CD4-positive, alpha-beta memory T cell (primary cell): ENCODE measurements at regions of chr3 and their contacts with region 1.

Region 1: DNA sequence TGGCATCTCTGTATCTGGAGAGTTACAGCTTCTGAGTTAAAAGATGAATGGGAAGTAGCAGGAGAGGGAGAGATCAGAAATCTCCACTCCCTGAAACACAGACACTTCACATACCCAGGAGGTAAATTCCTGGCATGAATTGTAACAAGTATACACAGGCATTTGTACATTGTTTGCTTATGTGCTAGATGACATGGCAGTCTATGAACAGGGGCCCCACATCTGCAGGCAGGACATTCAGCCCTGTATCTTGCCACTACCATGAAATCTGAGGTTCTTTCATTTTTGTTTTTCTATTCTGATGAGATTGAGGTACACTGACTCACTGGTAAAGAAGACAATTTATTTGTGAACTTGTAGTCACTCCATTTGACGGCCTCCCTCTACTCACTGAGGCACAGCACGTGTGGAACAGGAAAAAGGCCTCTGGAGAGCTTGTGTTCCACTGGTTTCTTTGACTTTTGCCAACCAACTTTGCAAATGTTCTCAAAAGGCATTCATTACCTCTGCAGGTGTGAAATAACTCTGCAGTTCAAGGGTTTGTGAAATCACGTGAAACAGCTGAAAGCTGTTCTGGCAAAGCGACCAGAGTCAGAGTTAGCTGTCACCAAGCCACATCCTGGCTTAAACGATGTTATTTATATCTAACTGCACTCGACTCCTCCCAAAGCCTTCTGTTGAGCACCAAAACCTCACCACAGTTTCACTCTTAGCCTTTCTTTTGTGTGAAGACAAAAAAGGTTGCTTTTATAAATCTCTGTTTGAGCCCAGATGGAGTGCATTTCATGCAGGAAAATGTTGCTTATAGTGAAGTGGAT is 401.3 kb upstream of the CFAP20DC start:
- DNase-seq: peak; percentile 79 to 88 (median 85)
- H3K4me3 ChIP-seq: peak overlapping the region in 1 of 2 donors; percentile 3
- H3K4me3 Mint-ChIP-seq: peak overlapping the region; percentile 48 to 84 (median 74)
- H3K27ac ChIP-seq: peak overlapping the region; percentile 72
- H3K27ac Mint-ChIP-seq: peak overlapping the region; percentile 95 to 99 (median 98)
- H3K4me1 ChIP-seq: peaks cover 70% of the 10 kb centered on the region
- H3K4me1 Mint-ChIP-seq: peaks cover 50 to 81% (median 71%) of the 10 kb centered on the region in 4 donors
- H3K27me3 ChIP-seq: no peaks in the 10 kb centered on the region
- H3K27me3 Mint-ChIP-seq: no peaks in the 10 kb centered on the region

Region 2: GRCh38 chr3:59212128-59212779 is 238.9 kb before region 1 on chr3:
- CTCF ChIA-PET with region 1: no interaction called
- POLR2A ChIA-PET with region 1: no interaction called
- intact Hi-C with region 1: loop called (anchors 2 kb)
- DNase-seq: peak in 4 of 5 donors; percentile 40 to 48 (median 42)
- H3K4me3 ChIP-seq: no peak overlapping the region
- H3K4me3 Mint-ChIP-seq: no peak overlapping the region
- H3K27ac ChIP-seq: no peak overlapping the region
- H3K27ac Mint-ChIP-seq: peak overlapping the region in 1 of 7 donors; percentile 38
- H3K4me1 ChIP-seq: no peaks in the 10 kb centered on the region
- H3K4me1 Mint-ChIP-seq: peaks cover 0 to 6% (median 2%) of the 10 kb centered on the region in 4 donors
- H3K27me3 ChIP-seq: no peaks in the 10 kb centered on the region
- H3K27me3 Mint-ChIP-seq: peaks cover 4 to 5% of the 10 kb centered on the region in 2 donors

Region 3: GRCh38 chr3:59386165-59386564 is 65.0 kb before region 1 on chr3:
- CTCF ChIA-PET with region 1: no interaction called
- POLR2A ChIA-PET with region 1: no interaction called
- intact Hi-C with region 1: loop called (anchors 5 kb)
- DNase-seq: no peak
- H3K4me3 ChIP-seq: no peak overlapping the region
- H3K4me3 Mint-ChIP-seq: peak overlapping the region in 6 of 8 donors; percentile 1 to 67 (median 44)
- H3K27ac ChIP-seq: no peak overlapping the region
- H3K27ac Mint-ChIP-seq: peak overlapping the region in 1 of 7 donors; percentile 5
- H3K4me1 ChIP-seq: peaks cover 24% of the 10 kb centered on the region
- H3K4me1 Mint-ChIP-seq: peaks cover 18 to 40% (median 24%) of the 10 kb centered on the region in 4 donors
- H3K27me3 ChIP-seq: no peaks in the 10 kb centered on the region
- H3K27me3 Mint-ChIP-seq: no peaks in the 10 kb centered on the region

Region 4: GRCh38 chr3:59424268-59425010 is 26.7 kb before region 1 on chr3:
- CTCF ChIA-PET with region 1: interaction called, 14 read pairs
- POLR2A ChIA-PET with region 1: interaction called, 40 read pairs
- intact Hi-C with region 1: loop called (anchors 1 kb)
- DNase-seq: peak; percentile 62 to 78 (median 70)
- H3K4me3 ChIP-seq: peak overlapping the region in 1 of 2 donors; percentile 10
- H3K4me3 Mint-ChIP-seq: peak overlapping the region; percentile 50 to 79 (median 62)
- H3K27ac ChIP-seq: no peak overlapping the region
- H3K27ac Mint-ChIP-seq: peak overlapping the region; percentile 68 to 96 (median 93)
- H3K4me1 ChIP-seq: peaks cover 47% of the 10 kb centered on the region
- H3K4me1 Mint-ChIP-seq: peaks cover 45 to 66% (median 55%) of the 10 kb centered on the region in 4 donors
- H3K27me3 ChIP-seq: no peaks in the 10 kb centered on the region
- H3K27me3 Mint-ChIP-seq: no peaks in the 10 kb centered on the region

Region 5: GRCh38 chr3:59857589-59858346 is 406.6 kb after region 1 on chr3:
- CTCF ChIA-PET with region 1: no interaction called
- POLR2A ChIA-PET with region 1: no interaction called
- intact Hi-C with region 1: loop called (anchors 5 kb)
- DNase-seq: peak; percentile 63 to 72 (median 67)
- H3K4me3 ChIP-seq: no peak overlapping the region
- H3K4me3 Mint-ChIP-seq: peak overlapping the region in 5 of 8 donors; percentile 15 to 72 (median 25)
- H3K27ac ChIP-seq: no peak overlapping the region
- H3K27ac Mint-ChIP-seq: peak overlapping the region in 1 of 7 donors; percentile 37
- H3K4me1 ChIP-seq: no peaks in the 10 kb centered on the region
- H3K4me1 Mint-ChIP-seq: peaks cover 6 to 11% (median 7%) of the 10 kb centered on the region in 4 donors
- H3K27me3 ChIP-seq: no peaks in the 10 kb centered on the region
- H3K27me3 Mint-ChIP-seq: no peaks in the 10 kb centered on the region